ENCODE measurements at regions of chr9 and their contacts with region 1.

Region 1: GRCh38 chr9:68704814-68705530 is at the start of gene PIP5K1B:
- DNase-seq: peak; percentile 79
- ATAC-seq: peak; percentile 92 to 96
- total RNA-seq, gene PIP5K1B: 47.0 to 50.1 TPM

Region 2: DNA sequence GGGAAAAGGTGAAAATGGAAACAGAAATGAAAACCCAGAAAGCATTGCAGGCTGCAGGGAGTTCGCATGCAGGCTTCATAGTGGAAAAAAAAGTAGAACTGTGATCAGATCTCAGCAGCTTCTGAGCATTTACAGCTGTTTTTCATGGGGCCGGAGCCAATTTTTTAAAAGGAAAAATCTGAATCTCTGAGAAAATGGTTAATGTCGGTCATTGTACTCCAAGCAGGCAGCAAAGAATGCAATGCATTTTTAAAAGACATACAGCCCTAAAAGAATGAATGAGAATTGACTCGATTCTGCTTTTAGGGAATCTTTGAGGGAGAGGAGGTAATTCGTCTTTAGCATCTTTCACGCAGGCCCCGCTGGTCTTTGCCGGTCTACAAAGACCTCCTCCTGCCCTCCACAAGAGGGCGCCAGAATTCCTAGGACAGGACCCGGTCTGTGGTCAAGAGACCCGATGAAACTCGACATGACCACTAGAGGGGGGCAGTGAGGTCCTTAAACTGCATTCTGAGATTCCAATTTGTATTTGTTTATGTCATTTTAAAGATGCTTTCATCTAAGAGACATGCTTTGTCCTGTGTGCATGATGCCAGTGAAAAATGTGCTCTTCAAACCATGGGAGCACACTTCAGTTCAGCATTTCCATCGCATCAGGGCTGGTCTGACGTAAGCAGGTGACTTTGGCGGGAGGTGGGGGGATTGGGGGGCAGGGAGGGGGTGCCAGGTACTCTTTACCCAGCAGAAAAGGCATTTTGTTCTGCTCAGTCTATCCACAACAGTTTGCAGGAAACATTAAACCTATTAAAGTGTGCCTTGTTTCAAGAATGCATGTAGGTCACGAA is 120.6 kb before region 1 on chr9:
- intact Hi-C with region 1: loop called (anchors 2 to 10 kb)
- DNase-seq: peak; percentile 85
- ATAC-seq: peak; percentile 96 to 97

Region 3: GRCh38 chr9:68844631-68845612 is 139.9 kb after region 1 on chr9:
- intact Hi-C with region 1: loop called in 1 of 2 experiments (anchors 10 kb)
- DNase-seq: peak; percentile 60
- ATAC-seq: peak; percentile 70

Region 4: GRCh38 chr9:68999393-69000105 is 294.6 kb after region 1 on chr9:
- intact Hi-C with region 1: loop called in 1 of 2 experiments (anchors 5 kb)
- DNase-seq: peak; percentile 60
- ATAC-seq: peak; percentile 93 to 95

Region 5: GRCh38 chr9:69027355-69028096 is 322.6 kb after region 1 on chr9:
- intact Hi-C with region 1: loop called in 1 of 2 experiments (anchors 10 kb)
- DNase-seq: no peak
- ATAC-seq: peak; percentile 64 to 67